Natural killer cell (primary cell): ENCODE measurements at regions of chr6 and their contacts with region 1.

Region 1: DNA sequence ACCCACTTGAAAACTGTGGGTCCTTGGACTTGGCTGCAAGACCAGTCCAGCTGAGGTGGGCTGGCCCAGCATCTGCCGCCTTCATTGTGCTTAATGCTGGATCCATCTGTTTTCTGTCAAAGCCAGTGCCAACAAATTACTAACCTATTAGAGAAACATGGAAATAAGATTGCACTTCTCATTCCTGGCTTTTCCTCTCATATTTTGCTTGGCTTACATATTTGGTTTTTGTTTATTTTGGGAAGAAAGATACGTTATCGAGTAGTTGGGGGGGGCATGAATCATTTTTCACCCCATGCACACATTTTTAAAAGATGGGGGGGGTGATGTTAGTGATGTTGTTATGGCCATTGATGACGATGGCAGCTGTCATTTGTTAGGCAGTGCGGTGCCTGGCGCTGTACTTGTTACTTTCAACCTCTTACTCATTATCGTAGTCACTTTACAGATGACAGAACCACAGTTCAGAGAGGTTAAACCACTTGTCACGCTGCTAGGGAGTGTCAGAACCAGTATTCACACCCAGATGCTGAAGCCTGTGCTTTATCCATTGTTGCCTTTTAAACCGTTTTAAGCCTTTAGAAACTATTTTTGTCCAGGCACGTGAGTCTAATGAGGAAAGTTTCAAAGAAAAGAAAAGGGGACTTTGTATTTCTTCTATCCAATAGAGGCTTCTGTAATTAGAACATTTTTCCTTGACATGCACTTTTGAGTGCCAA is 180.0 kb downstream of the TMEM242 start:
- DNase-seq: peak; percentile 69 to 75
- ATAC-seq: peak; percentile 84 to 96 (median 90)
- H3K4me3 ChIP-seq: no peak overlapping the region
- H3K4me3 Mint-ChIP-seq: peak overlapping the region; percentile 69
- H3K27ac ChIP-seq: peak overlapping the region; percentile 34
- H3K27ac Mint-ChIP-seq: peak overlapping the region; percentile 88 to 93
- H3K4me1 ChIP-seq: peaks cover 42% of the 10 kb centered on the region
- H3K4me1 Mint-ChIP-seq: peaks cover 52 to 59% of the 10 kb centered on the region in 2 donors
- H3K27me3 ChIP-seq: no peaks in the 10 kb centered on the region
- H3K27me3 Mint-ChIP-seq: no peaks in the 10 kb centered on the region
- CTCF ChIP-seq: no peak

Region 2: GRCh38 chr6:157054531-157054979 is 88.8 kb before region 1 on chr6:
- intact Hi-C with region 1: loop called (anchors 1 kb)
- DNase-seq: peak; percentile 32 to 79
- ATAC-seq: peak; percentile 81 to 93 (median 92)
- H3K4me3 ChIP-seq: no peak overlapping the region
- H3K4me3 Mint-ChIP-seq: peak overlapping the region; percentile 79
- H3K27ac ChIP-seq: peak overlapping the region; percentile 86
- H3K27ac Mint-ChIP-seq: peak overlapping the region; percentile 92 to 96
- H3K4me1 ChIP-seq: peaks cover 40% of the 10 kb centered on the region
- H3K4me1 Mint-ChIP-seq: peaks cover 44 to 49% of the 10 kb centered on the region in 2 donors
- H3K27me3 ChIP-seq: no peaks in the 10 kb centered on the region
- H3K27me3 Mint-ChIP-seq: no peaks in the 10 kb centered on the region
- CTCF ChIP-seq: no peak

Region 3: GRCh38 chr6:157099912-157100593 is 43.3 kb before region 1 on chr6:
- intact Hi-C with region 1: loop called (anchors 1 kb)
- DNase-seq: peak; percentile 44 to 74
- ATAC-seq: peak; percentile 97 to 99 (median 98)
- H3K4me3 ChIP-seq: no peak overlapping the region
- H3K4me3 Mint-ChIP-seq: peak overlapping the region; percentile 81
- H3K27ac ChIP-seq: peak overlapping the region; percentile 85
- H3K27ac Mint-ChIP-seq: peak overlapping the region; percentile 92 to 93
- H3K4me1 ChIP-seq: peaks cover 20% of the 10 kb centered on the region
- H3K4me1 Mint-ChIP-seq: peaks cover 57 to 58% of the 10 kb centered on the region in 2 donors
- H3K27me3 ChIP-seq: no peaks in the 10 kb centered on the region
- H3K27me3 Mint-ChIP-seq: no peaks in the 10 kb centered on the region
- CTCF ChIP-seq: no peak

Region 4: DNA sequence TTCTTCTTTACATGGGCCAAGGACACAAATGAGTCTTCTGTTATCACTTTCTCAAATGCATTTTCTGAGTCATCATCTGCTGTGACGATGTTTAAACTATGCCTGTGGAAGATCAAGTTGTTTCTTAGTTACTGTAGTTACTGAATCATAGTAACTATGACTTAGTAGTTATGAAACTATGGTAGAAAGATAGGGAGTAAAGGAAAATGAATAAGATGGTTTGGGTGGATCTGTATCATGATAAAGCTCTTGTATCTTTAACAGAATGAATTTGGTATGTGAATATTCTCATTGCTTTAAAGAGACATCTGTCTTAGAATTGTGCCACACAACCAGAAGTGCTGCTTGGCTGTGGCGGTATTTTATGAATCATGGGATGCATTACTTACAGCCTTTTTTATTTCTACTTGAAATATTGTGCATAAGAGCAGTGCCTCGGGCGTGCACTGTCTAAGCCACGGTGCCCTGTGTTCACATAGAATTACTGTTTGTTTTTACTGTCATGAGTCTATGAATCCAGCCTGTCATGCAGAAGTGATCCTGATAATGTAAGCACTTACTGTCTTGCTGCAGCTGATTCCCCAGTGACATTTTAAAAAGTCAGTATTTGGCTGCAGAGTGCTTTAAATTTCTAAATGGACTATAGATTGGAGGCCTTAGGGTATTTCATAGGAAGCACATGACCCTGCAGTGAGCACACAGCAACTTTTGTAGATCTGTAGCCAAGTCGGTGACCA is 35.2 kb before region 1 on chr6:
- intact Hi-C with region 1: loop called (anchors 2 kb)
- DNase-seq: no peak
- ATAC-seq: peak; percentile 50 to 78 (median 74)
- H3K4me3 ChIP-seq: no peak overlapping the region
- H3K4me3 Mint-ChIP-seq: no peak overlapping the region
- H3K27ac ChIP-seq: no peak overlapping the region
- H3K27ac Mint-ChIP-seq: peak overlapping the region; percentile 65 to 90
- H3K4me1 ChIP-seq: no peaks in the 10 kb centered on the region
- H3K4me1 Mint-ChIP-seq: peaks cover 39 to 42% of the 10 kb centered on the region in 2 donors
- H3K27me3 ChIP-seq: no peaks in the 10 kb centered on the region
- H3K27me3 Mint-ChIP-seq: no peaks in the 10 kb centered on the region
- CTCF ChIP-seq: no peak

Region 5: DNA sequence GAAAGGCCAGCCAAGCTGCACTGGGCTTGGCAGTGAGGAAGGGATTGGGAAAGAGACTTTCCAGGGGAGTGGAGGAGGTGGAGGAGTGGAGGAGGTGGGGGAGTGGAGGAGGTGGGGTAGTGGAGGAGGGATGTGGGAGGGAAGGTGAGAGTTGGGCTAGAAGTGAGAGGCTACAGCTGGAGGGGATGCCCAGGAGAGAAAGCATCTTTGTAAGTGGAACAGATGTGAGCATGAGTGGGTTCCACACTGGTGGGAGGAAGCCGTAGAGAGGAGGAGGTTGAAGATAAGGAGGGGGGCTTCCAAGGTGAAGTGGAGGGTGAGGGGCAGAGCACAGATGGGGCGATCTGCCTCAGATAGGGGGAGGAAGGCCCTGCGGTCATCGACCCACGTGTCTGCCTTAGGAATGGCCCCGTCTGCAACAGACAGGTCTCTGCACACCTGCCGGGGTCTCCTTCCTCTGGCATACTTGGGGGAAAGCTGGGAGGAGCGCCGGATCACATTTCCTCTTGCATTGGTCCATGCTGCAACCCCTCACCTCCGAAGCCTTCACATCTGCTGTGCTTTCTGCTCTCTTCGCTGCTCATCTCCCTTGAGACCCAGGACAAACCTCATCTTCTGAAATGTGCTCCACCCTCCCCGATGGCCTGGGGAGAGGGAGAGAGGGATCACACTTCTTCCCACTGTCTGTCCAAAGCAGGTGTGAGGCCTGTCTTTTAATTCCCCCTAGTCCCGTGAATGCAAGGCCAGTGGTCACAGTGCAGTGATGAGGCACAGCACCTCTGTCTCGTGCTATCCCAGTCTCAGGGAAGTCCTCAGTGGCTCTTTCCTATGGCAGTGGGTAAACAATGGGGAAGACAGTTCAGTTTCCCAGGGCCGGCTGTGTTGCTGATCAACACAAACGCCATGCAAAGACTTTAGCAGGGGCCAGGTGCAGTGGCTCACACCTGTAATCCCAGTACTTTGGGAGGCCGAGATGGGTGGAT is 631.1 kb after region 1 on chr6:
- intact Hi-C with region 1: no loop called
- DNase-seq: peak in 1 of 2 donors; percentile 42
- ATAC-seq: peak in 2 of 3 donors; percentile 40 to 54
- H3K4me3 ChIP-seq: no peak overlapping the region
- H3K4me3 Mint-ChIP-seq: no peak overlapping the region
- H3K27ac ChIP-seq: no peak overlapping the region
- H3K27ac Mint-ChIP-seq: peak overlapping the region in 1 of 2 donors; percentile 7
- H3K4me1 ChIP-seq: peaks cover 4% of the 10 kb centered on the region
- H3K4me1 Mint-ChIP-seq: peaks cover 0 to 14% of the 10 kb centered on the region in 2 donors
- H3K27me3 ChIP-seq: no peaks in the 10 kb centered on the region
- H3K27me3 Mint-ChIP-seq: peaks cover 22 to 25% of the 10 kb centered on the region in 2 donors
- CTCF ChIP-seq: no peak